ENCODE measurements at regions of chr22 and their contacts with region 1.

Region 1: DNA sequence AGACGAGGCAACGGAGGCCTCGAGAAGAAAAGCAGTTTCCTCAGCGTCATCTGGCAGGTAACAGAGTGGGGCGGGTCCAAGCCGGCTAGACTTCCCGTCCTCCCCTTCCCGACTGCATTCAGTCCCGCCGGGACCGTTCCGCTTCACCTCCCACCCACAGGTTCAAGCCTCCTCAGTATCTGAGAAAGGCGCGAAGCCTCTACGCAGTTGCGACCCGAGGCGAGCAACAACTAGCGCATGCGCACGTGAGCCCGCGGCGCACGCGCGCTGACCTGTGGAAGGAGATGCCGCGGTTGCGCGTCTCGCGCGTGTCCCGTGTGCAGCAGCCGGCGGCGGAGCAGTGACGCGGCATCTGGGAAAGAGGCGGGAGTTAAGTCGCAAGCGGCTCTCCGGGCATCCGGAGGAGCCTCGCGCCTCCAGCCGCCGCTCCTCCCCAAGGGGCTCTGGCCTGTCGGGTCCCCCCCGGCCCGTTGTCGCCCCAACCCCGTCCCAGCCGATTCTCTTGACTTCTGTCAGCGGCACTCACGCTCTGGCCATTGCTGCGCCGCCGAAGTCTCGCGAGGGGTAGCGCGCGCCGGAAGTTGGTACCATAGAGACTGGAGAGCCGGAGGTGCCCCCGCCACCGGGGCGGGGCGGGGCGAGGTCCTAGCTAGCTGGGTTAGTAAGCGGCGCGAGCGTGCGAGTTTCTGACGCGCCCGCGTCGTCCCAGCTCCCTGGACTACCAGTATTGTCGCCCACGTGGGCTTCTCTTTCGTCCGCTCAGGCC is at the start of gene THAP7:
- DNase-seq: peak; percentile 98
- H3K4me3 Mint-ChIP-seq: peak within 1 kb of the TSS; percentile 94
- H3K27ac Mint-ChIP-seq: peak within 1 kb of the TSS; percentile 97
- H3K4me1 Mint-ChIP-seq: peaks cover 21% of the 10 kb centered on the region
- H3K27me3 Mint-ChIP-seq: no peaks in the 10 kb centered on the region
- total RNA-seq, gene THAP7: 22.1 to 26.8 TPM

Region 2: GRCh38 chr22:20981787-20982562 is 19.8 kb before region 1 on chr22 and contains the start of gene LZTR1:
- CTCF ChIA-PET with region 1: interaction called, 17 read pairs
- POLR2A ChIA-PET with region 1: interaction called, 13 read pairs
- intact Hi-C with region 1: loop called (anchors 1 kb)
- DNase-seq: peak; percentile 83
- H3K4me3 Mint-ChIP-seq: peak within 1 kb of the TSS; percentile 95
- H3K27ac Mint-ChIP-seq: peak within 1 kb of the TSS; percentile 88
- H3K4me1 Mint-ChIP-seq: peaks cover 43% of the 10 kb centered on the region
- H3K27me3 Mint-ChIP-seq: no peaks in the 10 kb centered on the region
- total RNA-seq, gene LZTR1: 39.3 to 43.4 TPM

Region 3: DNA sequence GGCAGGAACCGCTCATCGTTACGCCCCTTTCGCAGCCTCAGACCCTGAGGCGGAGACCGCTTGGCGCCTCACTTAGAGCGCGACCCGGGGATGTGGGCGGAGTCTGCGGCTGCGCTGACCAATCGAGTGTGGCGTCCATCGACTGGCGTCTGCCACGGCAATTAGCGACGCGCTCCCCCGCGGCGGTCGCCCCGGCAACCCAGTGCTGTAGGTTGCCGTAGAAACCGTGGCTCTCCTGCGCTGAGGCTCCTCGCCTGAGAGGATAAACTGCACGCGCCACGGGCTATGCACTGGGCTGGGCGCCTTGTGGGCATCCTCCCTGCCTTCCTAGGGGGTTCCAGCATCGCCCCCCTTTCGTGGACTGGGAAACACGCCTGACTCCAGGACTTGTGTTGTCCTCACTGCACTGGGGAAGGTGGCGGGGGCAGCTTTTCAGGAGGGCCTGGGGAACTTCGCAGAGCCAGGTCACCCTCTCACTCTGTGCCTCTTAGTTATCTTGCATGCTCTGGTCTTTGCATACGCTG is 12.5 kb after region 1 on chr22:
- CTCF ChIA-PET with region 1: interaction called, 3 read pairs
- POLR2A ChIA-PET with region 1: interaction called, 7 read pairs
- intact Hi-C with region 1: loop called (anchors 1 kb)
- DNase-seq: peak; percentile 92
- H3K4me3 Mint-ChIP-seq: peak overlapping the region; percentile 89
- H3K27ac Mint-ChIP-seq: peak overlapping the region; percentile 70
- H3K4me1 Mint-ChIP-seq: peaks cover 20% of the 10 kb centered on the region
- H3K27me3 Mint-ChIP-seq: no peaks in the 10 kb centered on the region

Region 4: GRCh38 chr22:21055587-21056319 is 54.0 kb after region 1 on chr22:
- CTCF ChIA-PET with region 1: no interaction called
- POLR2A ChIA-PET with region 1: no interaction called
- intact Hi-C with region 1: no loop called
- DNase-seq: no peak
- H3K4me3 Mint-ChIP-seq: no peak overlapping the region
- H3K27ac Mint-ChIP-seq: no peak overlapping the region
- H3K4me1 Mint-ChIP-seq: peaks cover 12% of the 10 kb centered on the region
- H3K27me3 Mint-ChIP-seq: peaks cover 5% of the 10 kb centered on the region

Region 5: DNA sequence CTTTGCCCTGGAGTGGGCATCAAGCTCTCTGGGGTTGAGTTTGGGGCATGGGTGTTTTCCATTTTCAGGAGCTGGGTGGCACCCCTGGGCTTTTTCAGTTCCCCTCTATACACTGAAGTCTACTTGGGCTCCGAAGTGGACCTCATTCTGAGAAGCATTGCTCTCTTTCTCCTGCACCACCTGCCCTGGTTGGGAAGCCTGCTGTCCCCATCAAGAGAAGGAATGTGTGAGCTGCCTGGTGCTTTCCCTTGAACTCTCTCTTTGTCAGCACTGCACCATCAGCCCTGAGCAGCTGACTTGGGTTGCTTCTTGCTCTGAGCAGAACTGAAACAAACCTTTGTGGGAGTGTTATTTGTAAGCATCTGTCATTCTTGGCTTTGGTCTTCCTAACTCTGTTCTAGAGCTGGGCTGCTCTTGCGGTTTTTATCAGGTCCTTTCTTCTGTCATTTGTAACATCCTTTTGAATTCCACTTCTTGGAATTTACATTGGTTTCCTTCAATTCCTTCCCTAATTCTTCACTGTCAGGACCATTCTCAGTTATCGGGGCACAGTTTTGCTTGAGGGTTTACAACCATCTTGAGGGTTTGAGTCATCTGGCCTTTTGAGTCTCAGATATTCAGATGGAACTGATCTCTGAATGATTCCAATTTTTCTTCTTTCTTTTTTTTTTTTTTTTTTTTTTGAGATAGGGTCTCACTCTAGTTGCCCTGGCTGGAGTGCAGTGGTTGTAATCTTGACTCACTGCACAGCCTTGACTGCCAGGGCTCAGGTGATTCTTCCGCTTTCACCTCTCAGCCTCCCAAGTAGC is 586.3 kb after region 1 on chr22:
- CTCF ChIA-PET with region 1: no interaction called
- POLR2A ChIA-PET with region 1: no interaction called
- intact Hi-C with region 1: loop called (anchors 5 kb)
- DNase-seq: peak; percentile 80
- H3K4me3 Mint-ChIP-seq: no peak overlapping the region
- H3K27ac Mint-ChIP-seq: peak overlapping the region; percentile 74
- H3K4me1 Mint-ChIP-seq: peaks cover 57% of the 10 kb centered on the region
- H3K27me3 Mint-ChIP-seq: no peaks in the 10 kb centered on the region